Activated naive CD4-positive, alpha-beta T cell treated with anti-CD3 and anti-CD28 coated beads for 36 hours (primary cell): ENCODE measurements at regions of chr14 and their contacts with region 1.

Region 1: GRCh38 chr14:73771848-73772638 is 57.9 kb upstream of the PNMA1 start:
- DNase-seq: peak; percentile 92
- H3K4me3 Mint-ChIP-seq: peak overlapping the region; percentile 56
- H3K27ac Mint-ChIP-seq: peak overlapping the region; percentile 80
- H3K4me1 Mint-ChIP-seq: peaks cover 66% of the 10 kb centered on the region
- H3K27me3 Mint-ChIP-seq: no peaks in the 10 kb centered on the region

Region 2: DNA sequence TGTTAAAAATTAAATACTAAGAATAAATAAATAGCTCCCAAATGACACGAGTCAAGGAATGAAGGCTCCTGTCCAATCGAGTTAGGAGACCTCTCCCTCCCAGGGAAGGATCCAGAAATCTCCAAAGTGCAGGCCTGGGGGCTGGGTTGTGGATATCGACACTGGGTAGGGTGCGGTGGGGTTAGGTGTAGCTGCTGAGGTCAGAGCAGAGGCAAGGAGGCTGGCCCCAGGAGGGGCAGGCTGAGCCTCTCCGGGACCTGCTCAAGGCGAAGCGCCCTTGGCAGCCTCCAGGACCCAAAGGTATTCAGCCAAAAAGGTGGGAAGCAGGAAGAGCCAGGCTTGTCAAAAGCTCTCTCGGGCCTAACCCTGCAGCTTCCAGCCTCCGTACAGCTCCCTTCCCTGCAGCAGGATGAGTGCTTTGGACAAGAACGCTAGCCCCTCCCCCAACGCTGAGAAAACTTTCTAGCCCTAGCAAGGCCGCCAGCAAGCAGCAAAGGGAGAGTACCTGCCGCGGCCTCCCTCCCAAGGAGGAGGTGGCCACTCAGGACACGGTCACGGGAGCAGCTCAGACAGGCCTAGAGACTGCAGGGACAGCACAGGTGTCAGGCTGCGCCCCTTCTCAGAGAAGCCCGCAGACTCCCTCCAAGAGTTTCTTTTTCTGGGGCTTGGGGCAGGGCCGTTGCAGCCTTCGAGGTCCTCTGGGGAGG is 54.2 kb before region 1 on chr14:
- CTCF ChIA-PET with region 1: no interaction called
- intact Hi-C with region 1: no loop called
- DNase-seq: no peak
- H3K4me3 Mint-ChIP-seq: no peak overlapping the region
- H3K27ac Mint-ChIP-seq: no peak overlapping the region
- H3K4me1 Mint-ChIP-seq: peaks cover 6% of the 10 kb centered on the region
- H3K27me3 Mint-ChIP-seq: no peaks in the 10 kb centered on the region

Region 3: DNA sequence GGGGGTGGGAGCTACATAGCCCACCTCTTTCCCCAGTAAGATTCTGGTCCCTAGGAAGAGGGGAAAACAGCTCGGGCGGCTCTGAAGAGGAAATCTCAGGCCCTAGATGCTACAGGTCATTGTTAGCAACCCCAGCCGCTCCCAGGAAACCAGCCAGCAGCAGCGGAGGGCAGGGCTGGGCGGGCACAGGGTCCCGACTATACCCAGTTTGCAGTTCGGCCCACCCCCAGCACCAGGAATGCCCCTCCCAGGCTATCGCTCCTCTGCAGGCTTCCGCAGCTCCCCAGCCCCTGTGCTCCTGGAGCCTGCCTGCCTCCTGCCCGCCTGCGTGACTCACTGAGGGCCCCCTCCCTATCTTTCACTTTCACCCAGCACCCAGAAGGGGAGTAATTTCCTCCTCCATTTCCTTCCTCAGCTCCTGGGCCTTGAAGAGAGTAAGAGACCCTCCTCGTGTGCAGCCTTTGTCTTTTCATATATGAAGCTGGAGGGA is 30.6 kb before region 1 on chr14:
- CTCF ChIA-PET with region 1: interaction called, 4 read pairs
- intact Hi-C with region 1: loop called (anchors 1 kb)
- DNase-seq: peak; percentile 88
- H3K4me3 Mint-ChIP-seq: peak overlapping the region; percentile 43
- H3K27ac Mint-ChIP-seq: peak overlapping the region; percentile 84
- H3K4me1 Mint-ChIP-seq: peaks cover 63% of the 10 kb centered on the region
- H3K27me3 Mint-ChIP-seq: no peaks in the 10 kb centered on the region

Region 4: GRCh38 chr14:73816393-73816816 is 44.4 kb after region 1 on chr14:
- CTCF ChIA-PET with region 1: no interaction called
- intact Hi-C with region 1: no loop called
- DNase-seq: no peak
- H3K4me3 Mint-ChIP-seq: no peak overlapping the region
- H3K27ac Mint-ChIP-seq: no peak overlapping the region
- H3K4me1 Mint-ChIP-seq: no peaks in the 10 kb centered on the region
- H3K27me3 Mint-ChIP-seq: no peaks in the 10 kb centered on the region

Region 5: GRCh38 chr14:73924337-73924736 is 152.3 kb after region 1 on chr14:
- CTCF ChIA-PET with region 1: no interaction called
- intact Hi-C with region 1: no loop called
- DNase-seq: no peak
- H3K4me3 Mint-ChIP-seq: no peak overlapping the region
- H3K27ac Mint-ChIP-seq: peak overlapping the region; percentile 38
- H3K4me1 Mint-ChIP-seq: no peaks in the 10 kb centered on the region
- H3K27me3 Mint-ChIP-seq: no peaks in the 10 kb centered on the region